ENCODE measurements at regions of chr11 and their contacts with region 1.

Region 1: DNA sequence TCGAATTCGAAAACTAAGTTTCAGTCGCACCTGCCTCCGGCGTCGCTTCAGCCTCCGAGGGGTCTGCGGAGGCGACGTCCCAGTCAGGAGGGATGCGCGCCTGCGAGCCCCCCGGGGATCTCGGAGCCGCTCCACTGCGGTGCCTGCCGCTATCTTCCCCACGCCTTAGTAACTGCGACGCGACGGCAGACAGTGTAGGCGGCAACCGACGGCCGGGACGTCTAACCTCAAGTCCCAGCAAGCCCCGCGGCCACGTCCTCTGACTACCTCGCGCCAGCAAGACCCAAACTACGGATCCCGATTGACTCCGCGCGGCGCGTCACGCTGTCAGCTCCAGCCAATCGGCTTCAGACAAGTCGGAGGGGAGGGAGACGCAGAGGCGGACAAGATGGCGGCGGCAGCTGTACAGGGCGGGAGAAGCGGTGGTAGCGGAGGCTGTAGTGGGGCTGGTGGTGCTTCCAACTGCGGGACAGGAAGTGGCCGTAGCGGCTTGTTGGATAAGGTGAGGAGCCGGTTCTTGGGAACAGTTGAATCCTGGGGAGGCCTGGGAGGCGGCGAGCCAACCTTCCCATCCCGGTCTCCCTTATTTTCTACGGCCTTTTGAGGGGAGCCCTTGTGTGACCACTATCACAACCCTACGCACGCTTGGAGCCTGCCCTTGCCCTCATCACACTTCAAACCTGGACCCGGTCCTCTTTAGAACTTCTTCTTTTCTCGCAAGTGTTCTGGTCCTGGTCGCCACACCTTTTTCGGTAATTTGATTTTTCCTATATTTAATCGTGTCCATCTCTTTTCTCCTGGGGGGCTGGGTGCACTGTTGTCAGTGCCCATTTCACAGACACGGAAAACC is at the starts of genes SPCS2 and XRRA1:
- DNase-seq: peak; percentile 97
- H3K4me3 ChIP-seq: peak within 1 kb of the TSS; percentile 69 to 88 (median 80)
- H3K4me3 Mint-ChIP-seq: peak within 1 kb of the TSS; percentile 96 to 98
- H3K27ac ChIP-seq: peak within 1 kb of the TSS; percentile 46 to 92
- H3K27ac Mint-ChIP-seq: peak within 1 kb of the TSS; percentile 95 to 98 (median 97)
- H3K4me1 ChIP-seq: peaks cover 19 to 25% of the 10 kb centered on the region in 2 donors
- H3K4me1 Mint-ChIP-seq: peaks cover 34% of the 10 kb centered on the region
- H3K27me3 ChIP-seq: no peaks in the 10 kb centered on the region
- H3K27me3 Mint-ChIP-seq: peaks cover 0 to 3% (median 0%) of the 10 kb centered on the region in 3 donors
- CTCF ChIP-seq: no peak
- polyA plus RNA-seq, gene SPCS2: 12.4 to 185 (median 150) TPM
- polyA plus RNA-seq, gene XRRA1: 1.2 to 3.6 (median 3.5) TPM

Region 2: DNA sequence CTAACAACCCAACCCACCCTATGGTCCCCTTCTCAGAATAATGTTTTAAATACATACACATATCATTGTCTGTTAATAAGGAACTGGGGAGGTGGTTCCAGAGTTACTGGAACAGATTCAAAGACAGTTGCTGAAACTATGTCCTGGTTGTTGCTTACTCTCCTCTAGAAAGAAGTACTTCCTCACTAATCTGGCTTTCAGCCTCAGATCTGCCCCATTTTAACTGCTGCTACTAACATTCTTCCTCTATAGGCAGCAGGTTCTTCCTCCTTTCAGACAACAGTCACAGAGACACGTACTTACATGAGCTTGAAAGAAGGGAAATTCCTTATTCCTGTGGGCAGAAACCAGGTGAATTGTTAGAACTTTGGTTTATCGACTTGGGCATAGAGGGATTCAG is 31.5 kb after region 1 on chr11:
- intact Hi-C with region 1: loop called (anchors 5 kb)
- DNase-seq: peak; percentile 34 to 75 (median 50)
- H3K4me3 ChIP-seq: no peak overlapping the region
- H3K4me3 Mint-ChIP-seq: no peak overlapping the region
- H3K27ac ChIP-seq: peak overlapping the region in 1 of 2 donors; percentile 76
- H3K27ac Mint-ChIP-seq: peak overlapping the region; percentile 12 to 89 (median 67)
- H3K4me1 ChIP-seq: peaks cover 12 to 16% of the 10 kb centered on the region in 2 donors
- H3K4me1 Mint-ChIP-seq: peaks cover 21% of the 10 kb centered on the region
- H3K27me3 ChIP-seq: no peaks in the 10 kb centered on the region
- H3K27me3 Mint-ChIP-seq: no peaks in the 10 kb centered on the region
- CTCF ChIP-seq: no peak

Region 3: GRCh38 chr11:74988541-74989260 is 39.6 kb after region 1 on chr11 and contains the start of gene NEU3:
- intact Hi-C with region 1: loop called (anchors 2 to 5 kb)
- DNase-seq: peak; percentile 47 to 64 (median 63)
- H3K4me3 ChIP-seq: peak within 1 kb of the TSS; percentile 64 to 89 (median 79)
- H3K4me3 Mint-ChIP-seq: peak within 1 kb of the TSS; percentile 97 to 98
- H3K27ac ChIP-seq: peak within 1 kb of the TSS; percentile 71 to 82
- H3K27ac Mint-ChIP-seq: peak within 1 kb of the TSS; percentile 90 to 97 (median 94)
- H3K4me1 ChIP-seq: peaks cover 21 to 36% of the 10 kb centered on the region in 2 donors
- H3K4me1 Mint-ChIP-seq: peaks cover 34% of the 10 kb centered on the region
- H3K27me3 ChIP-seq: no peaks in the 10 kb centered on the region
- H3K27me3 Mint-ChIP-seq: no peaks in the 10 kb centered on the region
- CTCF ChIP-seq: no peak
- polyA plus RNA-seq, gene NEU3: 2.3 to 25.1 (median 3.9) TPM